ENCODE measurements at regions of chr7 and their contacts with region 1.

Region 1: GRCh38 chr7:92833024-92833765 is 3.2 kb downstream of the CDK6 start:
- DNase-seq: peak; percentile 95
- ATAC-seq: peak; percentile 64
- H3K4me3 Mint-ChIP-seq: peak overlapping the region; percentile 96
- H3K27ac Mint-ChIP-seq: peak overlapping the region; percentile 95
- H3K4me1 Mint-ChIP-seq: peaks cover 35% of the 10 kb centered on the region
- H3K27me3 Mint-ChIP-seq: no peaks in the 10 kb centered on the region

Region 2: GRCh38 chr7:92296880-92297445 is 536.2 kb before region 1 on chr7:
- CTCF ChIA-PET with region 1: no interaction called
- POLR2A ChIA-PET with region 1: no interaction called
- intact Hi-C with region 1: no loop called
- DNase-seq: no peak
- ATAC-seq: no peak
- H3K4me3 Mint-ChIP-seq: no peak overlapping the region
- H3K27ac Mint-ChIP-seq: no peak overlapping the region
- H3K4me1 Mint-ChIP-seq: peaks cover 11% of the 10 kb centered on the region
- H3K27me3 Mint-ChIP-seq: no peaks in the 10 kb centered on the region

Region 3: GRCh38 chr7:92447345-92448204 is 385.6 kb before region 1 on chr7 and contains the start of gene GATAD1:
- CTCF ChIA-PET with region 1: no interaction called
- POLR2A ChIA-PET with region 1: no interaction called
- intact Hi-C with region 1: loop called in 1 of 2 experiments (anchors 5 kb)
- DNase-seq: peak; percentile 91
- ATAC-seq: peak; percentile 89
- H3K4me3 Mint-ChIP-seq: peak within 1 kb of the TSS; percentile 86
- H3K27ac Mint-ChIP-seq: peak within 1 kb of the TSS; percentile 84
- H3K4me1 Mint-ChIP-seq: peaks cover 15% of the 10 kb centered on the region
- H3K27me3 Mint-ChIP-seq: no peaks in the 10 kb centered on the region
- total RNA-seq, gene GATAD1: 18.4 to 19.0 TPM

Region 4: DNA sequence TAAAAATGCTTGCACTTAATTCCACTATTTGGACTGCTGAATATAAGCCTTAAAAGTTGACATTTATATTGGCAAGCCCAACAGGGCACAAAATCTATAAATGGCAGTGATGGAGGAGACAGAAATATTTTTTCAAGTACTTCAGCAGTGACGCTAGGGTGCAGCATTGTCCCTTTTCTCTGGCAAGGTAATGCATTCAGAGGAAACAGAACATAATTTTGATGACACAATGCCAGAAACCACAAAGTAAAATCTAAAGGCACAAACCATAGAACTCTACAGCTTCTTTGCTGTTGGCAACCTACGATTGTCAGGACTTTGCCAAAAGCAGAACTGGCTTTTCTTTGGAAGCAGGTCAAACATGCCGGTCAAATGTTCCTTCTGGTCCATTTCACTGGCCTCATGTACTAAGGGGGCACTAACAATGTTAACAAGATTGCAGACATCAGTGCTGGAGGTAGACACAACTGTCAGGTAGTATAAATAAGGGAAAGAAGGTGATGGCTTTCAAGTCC is 212.1 kb before region 1 on chr7:
- CTCF ChIA-PET with region 1: interaction called, 20 read pairs
- POLR2A ChIA-PET with region 1: interaction called, 3 read pairs
- intact Hi-C with region 1: loop called (anchors 1 kb)
- DNase-seq: peak; percentile 90
- ATAC-seq: peak; percentile 78
- H3K4me3 Mint-ChIP-seq: peak overlapping the region; percentile 0
- H3K27ac Mint-ChIP-seq: peak overlapping the region; percentile 90
- H3K4me1 Mint-ChIP-seq: peaks cover 50% of the 10 kb centered on the region
- H3K27me3 Mint-ChIP-seq: no peaks in the 10 kb centered on the region

Region 5: DNA sequence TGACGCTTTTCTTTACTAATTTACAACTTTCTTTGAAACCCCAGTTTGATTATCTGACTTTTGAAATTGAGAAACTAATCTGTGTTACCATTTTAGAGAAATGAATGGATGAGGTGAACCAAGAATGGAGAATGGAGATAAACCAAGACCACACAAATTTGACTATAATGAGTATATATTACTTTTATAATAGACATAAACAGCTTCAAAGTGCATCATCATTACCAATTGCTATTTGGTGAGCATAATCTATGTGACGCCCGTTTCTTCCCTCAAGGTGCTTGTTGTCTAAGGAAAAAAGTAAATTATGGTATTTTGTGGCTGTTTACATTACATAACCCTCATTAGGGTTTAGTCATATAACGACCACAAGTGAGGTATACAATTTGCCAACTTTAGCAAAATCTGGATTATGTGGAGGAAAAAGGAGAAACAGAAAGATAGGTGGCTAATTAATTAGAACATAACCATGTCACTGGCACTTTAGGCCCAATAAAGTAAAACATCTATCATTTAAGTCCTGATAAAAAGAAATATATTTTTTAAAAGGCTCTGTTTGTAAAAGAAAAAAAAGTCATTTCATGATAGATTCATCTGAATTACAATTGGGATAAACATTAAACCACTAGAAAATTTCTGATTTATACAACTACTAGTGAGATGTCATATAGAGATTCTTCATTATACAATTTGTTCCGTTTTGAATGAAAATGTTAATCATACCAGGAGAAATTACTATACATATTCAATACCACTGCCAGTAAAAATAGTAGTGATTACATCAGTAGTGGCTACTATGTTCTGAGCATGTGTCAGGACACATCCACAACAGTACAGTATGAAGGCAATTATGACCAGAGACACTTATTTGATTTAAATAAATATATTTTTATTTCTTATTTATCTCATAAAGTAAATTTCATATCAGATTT is 124.8 kb before region 1 on chr7:
- CTCF ChIA-PET with region 1: interaction called, 6 read pairs
- POLR2A ChIA-PET with region 1: interaction called, 3 read pairs
- intact Hi-C with region 1: loop called (anchors 1 kb)
- DNase-seq: no peak
- ATAC-seq: peak; percentile 84
- H3K4me3 Mint-ChIP-seq: no peak overlapping the region
- H3K27ac Mint-ChIP-seq: peak overlapping the region; percentile 86
- H3K4me1 Mint-ChIP-seq: peaks cover 52% of the 10 kb centered on the region
- H3K27me3 Mint-ChIP-seq: no peaks in the 10 kb centered on the region

Region 6: GRCh38 chr7:92751902-92752901 is 81.0 kb before region 1 on chr7:
- CTCF ChIA-PET with region 1: no interaction called
- POLR2A ChIA-PET with region 1: no interaction called
- intact Hi-C with region 1: no loop called
- DNase-seq: no peak
- ATAC-seq: peak; percentile 75
- H3K4me3 Mint-ChIP-seq: no peak overlapping the region
- H3K27ac Mint-ChIP-seq: peak overlapping the region; percentile 68
- H3K4me1 Mint-ChIP-seq: peaks cover 66% of the 10 kb centered on the region
- H3K27me3 Mint-ChIP-seq: no peaks in the 10 kb centered on the region

Region 7: DNA sequence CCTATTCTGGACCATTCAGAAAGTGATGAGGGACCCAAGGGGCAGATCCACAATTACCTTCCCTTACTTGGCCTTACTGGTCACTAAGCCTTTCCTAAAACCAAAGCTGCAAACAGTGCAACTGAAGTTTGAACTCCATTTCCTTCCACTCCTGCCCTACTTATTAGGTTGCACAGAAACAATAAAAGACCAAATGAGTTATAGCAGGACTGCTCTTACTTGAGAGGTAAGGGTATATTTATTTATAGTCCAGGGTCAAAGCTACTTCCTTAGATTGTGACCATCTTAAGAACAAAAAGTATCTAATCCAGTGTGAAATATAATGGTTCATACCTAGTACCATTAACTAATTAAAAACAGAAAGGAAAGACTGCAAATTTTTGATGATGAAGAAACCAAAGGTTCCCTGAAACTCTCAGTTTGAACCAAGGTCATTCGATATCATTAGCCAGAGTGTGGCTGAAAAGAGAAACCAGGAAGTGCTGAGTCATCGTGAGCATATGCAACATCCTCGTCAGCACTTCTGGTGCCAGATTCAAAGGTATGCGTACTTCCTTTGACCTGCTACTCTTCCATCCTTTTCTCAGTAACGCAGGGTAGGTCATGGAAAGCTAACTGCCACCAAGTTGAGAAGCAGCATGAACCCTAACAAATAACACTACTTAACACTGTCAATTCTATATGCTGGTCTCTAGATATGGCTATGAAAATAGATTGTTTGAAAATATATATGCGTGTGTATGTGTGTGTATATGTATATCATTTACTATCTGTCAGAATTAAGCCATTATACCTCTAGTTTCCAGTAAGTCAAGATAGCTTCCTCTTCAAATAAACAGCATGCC is 23.6 kb before region 1 on chr7:
- CTCF ChIA-PET with region 1: interaction called, 67 read pairs
- POLR2A ChIA-PET with region 1: interaction called, 35 read pairs
- intact Hi-C with region 1: loop called (anchors 1 kb)
- DNase-seq: peak; percentile 75
- ATAC-seq: peak; percentile 56
- H3K4me3 Mint-ChIP-seq: peak overlapping the region; percentile 50
- H3K27ac Mint-ChIP-seq: peak overlapping the region; percentile 83
- H3K4me1 Mint-ChIP-seq: peaks cover 81% of the 10 kb centered on the region
- H3K27me3 Mint-ChIP-seq: no peaks in the 10 kb centered on the region

Region 8: GRCh38 chr7:93055543-93056107 is 222.4 kb after region 1 on chr7:
- CTCF ChIA-PET with region 1: no interaction called
- POLR2A ChIA-PET with region 1: no interaction called
- intact Hi-C with region 1: loop called (anchors 1 kb)
- DNase-seq: no peak
- ATAC-seq: peak; percentile 74
- H3K4me3 Mint-ChIP-seq: no peak overlapping the region
- H3K27ac Mint-ChIP-seq: no peak overlapping the region
- H3K4me1 Mint-ChIP-seq: peaks cover 9% of the 10 kb centered on the region
- H3K27me3 Mint-ChIP-seq: peaks cover 13% of the 10 kb centered on the region